KBM-7 (cell line): ENCODE measurements at regions of chr22 and their contacts with region 1.

Region 1: GRCh38 chr22:45577746-45578523 is 75.3 kb downstream of the FBLN1 start:
- DNase-seq: peak; percentile 78

Region 2: GRCh38 chr22:45645526-45646414 is 67.8 kb after region 1 on chr22:
- in situ Hi-C with region 1: loop called (anchors 10 kb)
- DNase-seq: peak; percentile 78

Region 3: GRCh38 chr22:45968751-45969413 is 390.9 kb after region 1 on chr22:
- in situ Hi-C with region 1: loop called (anchors 10 kb)
- DNase-seq: no peak

Region 4: DNA sequence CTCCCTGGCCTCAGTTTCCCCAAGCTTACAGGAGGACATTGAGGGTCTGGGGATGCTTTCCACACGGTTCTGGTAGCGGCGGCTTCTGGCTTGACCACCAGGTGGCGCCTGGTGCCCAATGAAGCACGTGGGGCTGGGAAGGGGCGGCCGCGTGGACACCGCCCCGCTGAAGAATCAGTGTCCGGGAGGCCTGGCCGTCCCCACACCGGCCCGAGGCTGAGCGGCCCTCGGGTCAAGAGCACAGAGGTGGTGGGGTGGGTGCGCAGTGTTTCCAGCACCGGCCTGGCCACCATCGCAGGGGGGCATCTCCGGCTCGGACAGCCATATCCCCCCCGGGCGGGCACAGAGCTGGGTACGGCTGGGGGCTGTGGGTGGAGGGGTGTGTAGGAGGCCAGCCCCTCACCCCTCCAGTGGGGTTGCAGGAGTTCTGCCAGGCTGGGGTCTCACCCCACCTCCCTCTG is 544.6 kb after region 1 on chr22:
- in situ Hi-C with region 1: loop called (anchors 10 kb)
- DNase-seq: peak; percentile 68